ENCODE measurements at regions of chr14 and their contacts with region 1.

Region 1: DNA sequence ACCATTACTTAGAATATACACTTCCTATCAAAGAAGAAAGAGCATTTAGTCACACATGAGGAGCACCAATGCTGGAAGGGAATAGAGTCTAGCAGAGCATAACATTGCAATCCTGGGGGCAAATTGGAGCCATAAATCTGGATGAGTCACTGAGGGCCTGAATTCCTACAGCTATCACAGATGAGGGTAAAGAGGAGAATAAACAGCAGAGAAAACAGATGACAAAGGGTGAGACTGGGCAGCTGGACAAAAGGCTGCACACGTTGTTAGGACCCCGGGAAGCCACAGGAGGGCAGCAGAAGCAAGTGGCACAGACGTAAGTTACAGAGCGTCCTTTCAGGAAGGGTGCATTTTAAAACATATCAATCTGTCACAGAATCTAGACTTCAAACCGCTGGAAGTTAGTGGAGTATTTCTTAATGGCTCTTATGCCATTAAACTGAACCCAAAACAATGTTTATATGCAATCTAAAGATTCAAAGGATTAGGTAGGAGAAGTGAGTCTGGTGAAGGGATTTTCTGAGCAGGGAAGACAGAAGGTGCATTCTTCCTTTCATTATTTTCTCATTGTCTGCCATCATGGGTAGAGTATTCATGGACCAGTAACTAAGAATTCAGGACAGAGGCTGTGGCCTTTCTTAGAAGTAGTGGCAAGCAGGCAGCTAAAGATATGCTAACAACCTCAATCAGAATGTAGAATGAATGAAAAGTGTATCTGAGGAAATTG is 159.8 kb upstream of the DAAM1 start:
- DNase-seq: peak; percentile 64
- H3K4me3 ChIP-seq: no peak overlapping the region
- H3K27ac ChIP-seq: no peak overlapping the region
- H3K4me1 ChIP-seq: peaks cover 0 to 3% (median 0%) of the 10 kb centered on the region in 4 donors
- H3K27me3 ChIP-seq: no peaks in the 10 kb centered on the region
- CTCF ChIP-seq: peak; percentile 58 to 78 (median 75)
- EP300 ChIP-seq: no peak
- POLR2A ChIP-seq: no peak

Region 2: GRCh38 chr14:59044707-59045106 is 16.1 kb after region 1 on chr14:
- in situ Hi-C with region 1: no loop called
- intact Hi-C with region 1: loop called (anchors 1 kb)
- DNase-seq: no peak
- H3K4me3 ChIP-seq: no peak overlapping the region
- H3K27ac ChIP-seq: no peak overlapping the region
- H3K4me1 ChIP-seq: peaks cover 0 to 5% (median 0%) of the 10 kb centered on the region in 4 donors
- H3K27me3 ChIP-seq: no peaks in the 10 kb centered on the region
- CTCF ChIP-seq: no peak
- EP300 ChIP-seq: no peak
- POLR2A ChIP-seq: no peak